Panc1 (cell line): ENCODE measurements at regions of chr15 and their contacts with region 1.

Region 1: DNA sequence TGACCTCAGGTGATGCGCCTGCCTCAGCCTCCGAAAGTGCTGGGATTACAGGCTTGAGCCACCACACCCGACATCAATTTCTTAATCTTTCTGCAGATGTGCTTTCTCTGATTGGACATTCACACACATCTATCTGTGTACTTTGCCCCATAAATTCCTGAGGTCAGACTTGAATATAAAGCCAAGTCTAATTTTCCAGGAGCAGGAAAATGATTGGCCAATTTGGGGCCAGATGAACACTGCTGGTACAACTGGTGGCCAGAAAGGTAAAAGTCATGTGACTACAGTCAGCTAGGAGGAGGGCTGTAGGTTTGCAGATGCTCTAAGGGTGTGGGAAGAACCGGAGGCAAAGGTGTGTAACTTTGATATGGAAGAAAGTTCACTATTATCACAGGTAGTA is 3.2 kb upstream of the RAD51 start:
- DNase-seq: no peak
- ATAC-seq: no peak
- H3K4me3 ChIP-seq: no peak overlapping the region
- H3K27ac ChIP-seq: no peak overlapping the region
- H3K4me1 ChIP-seq: no peaks in the 10 kb centered on the region; the same call in 1 of the 2 replicates
- H3K27me3 ChIP-seq: no peaks in the 10 kb centered on the region
- CTCF ChIP-seq: no peak

Region 2: DNA sequence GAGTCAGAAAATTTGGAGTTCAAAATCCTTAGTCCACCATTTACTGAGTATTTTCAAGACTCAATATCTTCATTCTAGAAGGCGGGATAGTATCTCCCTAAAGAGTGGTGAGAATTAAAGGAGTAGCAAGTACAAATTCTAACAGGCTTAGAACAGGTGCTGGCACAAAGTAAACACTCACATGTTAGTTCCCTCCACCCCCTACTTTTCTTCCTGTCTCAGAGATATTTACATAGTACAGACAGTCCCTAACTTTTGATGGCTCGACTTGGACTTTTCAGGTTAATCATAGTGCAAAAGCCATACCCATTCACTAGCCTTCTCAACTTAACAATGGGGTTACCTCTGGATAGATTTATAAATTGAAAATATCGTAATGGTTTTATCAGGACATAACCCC is 1650.9 kb before region 1 on chr15:
- CTCF ChIA-PET with region 1: no interaction called
- POLR2A ChIA-PET with region 1: no interaction called
- in situ Hi-C with region 1: no loop called
- intact Hi-C with region 1: no loop called
- DNase-seq: no peak
- ATAC-seq: no peak
- H3K4me3 ChIP-seq: no peak overlapping the region
- H3K27ac ChIP-seq: no peak overlapping the region
- H3K4me1 ChIP-seq: no peaks in the 10 kb centered on the region
- H3K27me3 ChIP-seq: no peaks in the 10 kb centered on the region
- CTCF ChIP-seq: no peak

Region 3: GRCh38 chr15:40650479-40650878 is 41.3 kb before region 1 on chr15:
- CTCF ChIA-PET with region 1: no interaction called
- POLR2A ChIA-PET with region 1: interaction called, 10 read pairs
- in situ Hi-C with region 1: no loop called
- intact Hi-C with region 1: no loop called
- DNase-seq: no peak
- ATAC-seq: no peak
- H3K4me3 ChIP-seq: no peak overlapping the region
- H3K27ac ChIP-seq: no peak overlapping the region
- H3K4me1 ChIP-seq: no peaks in the 10 kb centered on the region
- H3K27me3 ChIP-seq: no peaks in the 10 kb centered on the region
- CTCF ChIP-seq: no peak

Region 4: DNA sequence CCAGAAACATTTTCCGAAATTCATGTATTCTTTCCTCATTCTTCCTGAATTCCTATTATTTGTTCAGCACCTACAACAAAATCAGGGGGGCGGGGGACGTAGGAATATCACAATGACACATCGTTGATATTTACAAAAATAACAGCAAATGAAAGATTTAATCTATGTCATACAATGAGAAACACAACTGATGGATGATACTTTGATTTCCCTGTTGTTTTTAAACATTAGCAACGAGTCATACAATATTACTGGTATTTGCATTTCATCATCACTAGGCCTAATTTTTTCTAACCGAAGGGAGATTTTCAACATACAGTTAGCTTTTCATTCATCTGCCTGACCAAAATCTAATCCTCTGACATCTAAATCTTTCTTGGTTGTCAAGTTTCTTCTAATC is 469.6 kb after region 1 on chr15:
- CTCF ChIA-PET with region 1: no interaction called
- POLR2A ChIA-PET with region 1: no interaction called
- in situ Hi-C with region 1: no loop called
- intact Hi-C with region 1: no loop called
- DNase-seq: no peak
- ATAC-seq: no peak
- H3K4me3 ChIP-seq: no peak overlapping the region
- H3K27ac ChIP-seq: no peak overlapping the region
- H3K4me1 ChIP-seq: no peaks in the 10 kb centered on the region
- H3K27me3 ChIP-seq: no peaks in the 10 kb centered on the region
- CTCF ChIP-seq: no peak